Activated CD8-positive, alpha-beta T cell treated with anti-CD3 and anti-CD28 coated beads for 36 hours (primary cell): ENCODE measurements at regions of chr19 and their contacts with region 1.

Region 1: GRCh38 chr19:40662921-40663694 is 27.3 kb downstream of the NUMBL start:
- DNase-seq: peak; percentile 93
- ATAC-seq: peak; percentile 83
- H3K4me3 Mint-ChIP-seq: peak overlapping the region; percentile 69
- H3K27ac Mint-ChIP-seq: peak overlapping the region; percentile 76
- H3K4me1 Mint-ChIP-seq: peaks cover 21% of the 10 kb centered on the region
- H3K27me3 Mint-ChIP-seq: no peaks in the 10 kb centered on the region
- CTCF ChIP-seq: peak; percentile 58

Region 2: GRCh38 chr19:40640744-40641143 is 22.4 kb before region 1 on chr19:
- CTCF ChIA-PET with region 1: interaction called, 33 read pairs
- POLR2A ChIA-PET with region 1: interaction called, 5 read pairs
- intact Hi-C with region 1: no loop called
- DNase-seq: no peak
- ATAC-seq: no peak
- H3K4me3 Mint-ChIP-seq: no peak overlapping the region
- H3K27ac Mint-ChIP-seq: no peak overlapping the region
- H3K4me1 Mint-ChIP-seq: peaks cover 2% of the 10 kb centered on the region
- H3K27me3 Mint-ChIP-seq: peaks cover 1% of the 10 kb centered on the region
- CTCF ChIP-seq: no peak

Region 3: DNA sequence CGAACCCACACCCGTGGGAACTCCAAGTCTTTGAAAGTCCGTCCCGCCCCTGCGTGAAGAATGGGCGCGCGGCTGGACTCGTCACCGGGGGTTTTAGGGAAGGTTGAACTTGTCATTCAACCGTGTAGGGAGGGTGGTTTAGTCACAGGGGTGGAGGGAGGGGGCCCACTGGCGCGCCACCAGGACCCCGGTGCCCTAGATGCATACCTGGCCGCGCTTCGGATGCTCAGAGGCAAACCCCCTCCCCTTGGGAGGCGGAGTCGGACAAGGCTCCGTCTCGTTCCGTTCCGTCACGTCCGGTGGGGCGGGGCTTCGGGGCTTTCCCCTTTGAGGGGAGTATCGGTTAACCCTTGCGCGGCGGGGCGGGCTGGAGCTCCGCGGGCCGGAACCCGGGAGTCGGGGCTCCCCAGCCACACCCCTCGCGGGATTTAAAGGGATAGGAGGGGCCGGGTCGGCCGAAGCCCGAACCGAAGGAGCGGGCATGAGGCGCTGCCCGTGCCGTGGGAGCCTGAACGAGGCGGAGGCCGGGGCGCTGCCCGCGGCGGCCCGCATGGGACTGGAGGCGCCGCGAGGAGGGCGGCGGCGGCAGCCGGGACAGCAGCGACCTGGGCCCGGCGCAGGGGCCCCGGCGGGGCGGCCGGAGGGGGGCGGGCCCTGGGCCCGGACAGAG is 53.7 kb after region 1 on chr19 and contains the starts of genes COQ8B and ITPKC:
- CTCF ChIA-PET with region 1: interaction called, 4 read pairs
- POLR2A ChIA-PET with region 1: interaction called, 4 read pairs
- intact Hi-C with region 1: loop called (anchors 5 kb)
- DNase-seq: peak; percentile 100
- ATAC-seq: peak; percentile 74
- H3K4me3 Mint-ChIP-seq: peak within 1 kb of the TSS; percentile 94
- H3K27ac Mint-ChIP-seq: peak within 1 kb of the TSS; percentile 96
- H3K4me1 Mint-ChIP-seq: peaks cover 50% of the 10 kb centered on the region
- H3K27me3 Mint-ChIP-seq: no peaks in the 10 kb centered on the region
- CTCF ChIP-seq: no peak
- total RNA-seq, gene COQ8B: 23.2 to 24.0 TPM
- total RNA-seq, gene ITPKC: 4.8 to 5.2 TPM

Region 4: DNA sequence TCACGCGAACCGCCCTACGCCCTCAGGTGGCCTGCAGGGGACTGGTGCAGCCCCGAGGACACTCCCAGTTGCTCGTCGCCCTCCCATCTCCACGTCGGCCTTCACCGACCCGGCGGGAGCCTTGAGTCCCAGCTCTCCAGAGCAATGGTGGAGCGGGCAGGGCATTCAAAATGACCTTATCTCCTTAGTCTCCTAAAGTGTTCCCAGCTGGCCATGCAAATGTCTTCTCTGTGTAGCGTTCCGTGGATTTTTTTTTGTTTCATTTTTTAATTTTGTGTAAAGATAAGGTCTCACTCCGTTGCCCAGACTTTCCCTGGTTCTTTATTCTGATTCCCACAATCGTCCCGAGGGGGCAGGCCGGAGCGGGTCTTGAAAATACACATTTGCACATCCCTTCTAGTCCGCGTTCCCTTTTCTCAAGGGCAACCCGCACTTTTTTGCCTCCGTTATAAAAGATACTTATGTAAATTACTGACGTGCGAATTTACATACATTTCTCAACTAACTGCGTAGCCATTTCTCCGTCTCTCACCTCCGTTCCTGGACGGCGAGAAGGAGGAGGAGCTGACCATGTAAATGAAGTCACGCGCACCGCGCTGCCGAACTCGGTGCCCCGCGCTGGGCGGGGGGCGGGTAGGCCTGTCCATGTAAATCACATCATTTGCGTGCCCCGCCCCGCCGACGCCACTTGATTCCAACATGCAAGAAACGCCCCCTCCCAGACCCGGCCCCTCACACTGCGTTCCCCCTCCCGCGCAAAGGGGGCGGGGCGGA is 135.3 kb after region 1 on chr19:
- CTCF ChIA-PET with region 1: interaction called, 3 read pairs
- POLR2A ChIA-PET with region 1: interaction called, 3 read pairs
- intact Hi-C with region 1: loop called (anchors 5 kb)
- DNase-seq: peak; percentile 100
- ATAC-seq: peak; percentile 35
- H3K4me3 Mint-ChIP-seq: peak overlapping the region; percentile 95
- H3K27ac Mint-ChIP-seq: peak overlapping the region; percentile 97
- H3K4me1 Mint-ChIP-seq: peaks cover 51% of the 10 kb centered on the region
- H3K27me3 Mint-ChIP-seq: no peaks in the 10 kb centered on the region
- CTCF ChIP-seq: no peak

Region 5: DNA sequence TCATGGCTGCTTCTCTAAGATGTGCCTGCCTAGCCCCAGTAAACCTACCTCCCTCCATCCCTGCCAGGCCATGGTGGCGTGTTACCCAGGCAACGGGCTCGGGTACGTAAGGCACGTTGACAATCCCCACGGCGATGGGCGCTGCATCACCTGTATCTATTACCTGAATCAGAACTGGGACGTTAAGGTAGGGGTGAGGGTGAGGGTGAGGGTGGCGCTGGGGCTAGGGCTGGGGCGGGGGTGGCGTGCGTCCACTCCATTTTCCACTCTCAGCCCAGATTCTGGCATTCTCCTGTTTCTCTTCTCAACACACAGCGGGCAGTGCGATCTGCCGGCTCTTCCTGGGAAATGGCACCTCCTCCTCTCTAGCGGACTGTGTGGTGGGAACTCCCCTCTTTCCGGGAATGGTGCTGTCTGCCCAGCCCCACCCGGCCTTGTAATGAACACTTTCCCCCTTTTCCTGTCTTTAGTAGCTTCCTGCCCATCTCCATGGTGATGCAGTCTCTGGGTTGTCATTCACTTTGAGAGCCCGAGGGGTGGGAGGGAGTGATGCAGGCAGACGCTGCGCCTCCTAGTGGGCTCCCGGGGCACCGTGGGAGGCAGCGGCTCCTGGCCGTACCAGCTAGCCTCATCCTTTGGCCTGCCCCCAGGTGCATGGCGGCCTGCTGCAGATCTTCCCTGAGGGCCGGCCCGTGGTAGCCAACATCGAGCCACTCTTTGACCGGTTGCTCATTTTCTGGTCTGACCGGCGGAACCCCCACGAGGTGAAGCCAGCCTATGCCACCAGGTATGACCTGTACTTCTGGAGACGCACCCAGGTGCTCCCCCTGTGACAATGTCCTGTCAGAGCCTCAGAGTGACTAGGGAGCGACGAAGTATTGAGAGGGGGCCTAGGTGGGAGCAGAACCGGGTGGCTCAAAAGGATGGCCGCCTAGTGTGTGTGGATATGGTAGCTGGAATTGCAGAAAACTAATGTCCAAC is 143.7 kb after region 1 on chr19:
- CTCF ChIA-PET with region 1: interaction called, 22 read pairs
- POLR2A ChIA-PET with region 1: interaction called, 3 read pairs
- intact Hi-C with region 1: loop called (anchors 5 kb)
- DNase-seq: peak; percentile 90
- ATAC-seq: peak; percentile 49
- H3K4me3 Mint-ChIP-seq: peak overlapping the region; percentile 54
- H3K27ac Mint-ChIP-seq: peak overlapping the region; percentile 88
- H3K4me1 Mint-ChIP-seq: peaks cover 74% of the 10 kb centered on the region
- H3K27me3 Mint-ChIP-seq: no peaks in the 10 kb centered on the region
- CTCF ChIP-seq: peak; percentile 93

Region 6: DNA sequence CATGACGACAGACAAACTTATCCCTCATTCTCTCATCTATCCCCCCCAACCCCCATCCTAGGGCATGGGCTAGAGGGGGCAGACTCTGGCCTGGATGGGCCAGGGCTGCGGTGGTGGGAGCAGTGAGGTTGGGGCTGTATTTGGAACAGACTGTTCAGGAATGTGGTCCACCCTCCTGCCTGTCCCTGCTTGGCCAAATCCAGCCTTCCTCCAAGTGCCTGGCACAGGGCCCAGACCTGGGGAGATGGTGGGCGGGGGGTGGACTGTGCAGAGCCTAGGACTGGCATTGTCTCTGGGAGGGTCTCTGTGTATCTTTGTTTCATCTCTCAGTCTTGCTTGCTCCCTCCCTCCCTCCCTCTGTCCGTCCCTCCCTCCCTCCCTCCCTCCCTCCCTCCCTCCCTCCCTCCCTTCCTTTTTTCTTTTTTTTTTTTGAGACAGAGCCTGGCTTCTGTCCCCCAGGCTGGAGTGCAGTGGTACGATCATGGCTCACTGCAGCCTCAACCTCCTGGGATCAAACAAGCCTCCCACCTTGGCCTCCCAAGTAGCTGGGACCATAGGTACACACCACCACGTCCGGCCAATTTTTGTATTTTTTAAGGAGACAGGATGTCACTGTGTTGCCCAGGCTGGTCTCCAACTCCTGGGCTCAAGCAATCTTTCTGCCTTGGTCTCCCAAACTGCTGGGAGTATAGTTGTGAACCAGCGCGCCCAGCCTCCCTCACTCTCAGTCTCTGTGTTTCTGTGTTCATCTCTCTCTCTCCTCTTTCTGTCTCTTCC is 150.3 kb after region 1 on chr19:
- CTCF ChIA-PET with region 1: interaction called, 42 read pairs
- POLR2A ChIA-PET with region 1: no interaction called
- intact Hi-C with region 1: loop called (anchors 5 kb)
- DNase-seq: no peak
- ATAC-seq: no peak
- H3K4me3 Mint-ChIP-seq: no peak overlapping the region
- H3K27ac Mint-ChIP-seq: no peak overlapping the region
- H3K4me1 Mint-ChIP-seq: peaks cover 26% of the 10 kb centered on the region
- H3K27me3 Mint-ChIP-seq: no peaks in the 10 kb centered on the region
- CTCF ChIP-seq: no peak